Activated CD4-positive, alpha-beta T cell treated with anti-CD3 and anti-CD28 coated beads, Interleukin-2, amount 10 ng/mL, durations not matched to agents 7 days and 5 days (primary cell): ENCODE measurements at regions of chr6 and their contacts with region 1.

Region 1: DNA sequence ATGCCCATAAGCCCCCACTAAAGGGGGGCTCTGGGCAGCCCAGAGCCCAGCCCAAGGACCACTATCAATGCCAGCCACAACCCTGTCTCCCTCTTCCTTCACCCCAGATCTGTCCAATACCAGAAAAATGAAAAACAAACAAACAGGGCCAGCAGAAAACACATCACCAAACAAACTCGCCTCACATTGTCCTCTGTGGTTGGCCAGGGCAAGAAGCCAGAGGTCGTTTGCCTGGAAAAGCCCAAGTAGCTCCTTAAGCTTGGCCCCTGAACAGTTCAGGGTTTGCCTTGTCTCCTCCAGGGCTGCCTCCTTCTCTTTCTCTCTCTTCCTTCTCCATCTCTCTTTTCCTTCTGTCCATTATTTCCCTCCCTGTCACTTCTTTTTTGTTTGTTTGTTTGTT is 10.1 kb upstream of the SCUBE3 start:
- DNase-seq: no peak
- H3K4me3 Mint-ChIP-seq: no peak overlapping the region
- H3K27ac Mint-ChIP-seq: no peak overlapping the region
- H3K4me1 Mint-ChIP-seq: no peaks in the 10 kb centered on the region
- H3K27me3 Mint-ChIP-seq: peaks cover 44% of the 10 kb centered on the region

Region 2: DNA sequence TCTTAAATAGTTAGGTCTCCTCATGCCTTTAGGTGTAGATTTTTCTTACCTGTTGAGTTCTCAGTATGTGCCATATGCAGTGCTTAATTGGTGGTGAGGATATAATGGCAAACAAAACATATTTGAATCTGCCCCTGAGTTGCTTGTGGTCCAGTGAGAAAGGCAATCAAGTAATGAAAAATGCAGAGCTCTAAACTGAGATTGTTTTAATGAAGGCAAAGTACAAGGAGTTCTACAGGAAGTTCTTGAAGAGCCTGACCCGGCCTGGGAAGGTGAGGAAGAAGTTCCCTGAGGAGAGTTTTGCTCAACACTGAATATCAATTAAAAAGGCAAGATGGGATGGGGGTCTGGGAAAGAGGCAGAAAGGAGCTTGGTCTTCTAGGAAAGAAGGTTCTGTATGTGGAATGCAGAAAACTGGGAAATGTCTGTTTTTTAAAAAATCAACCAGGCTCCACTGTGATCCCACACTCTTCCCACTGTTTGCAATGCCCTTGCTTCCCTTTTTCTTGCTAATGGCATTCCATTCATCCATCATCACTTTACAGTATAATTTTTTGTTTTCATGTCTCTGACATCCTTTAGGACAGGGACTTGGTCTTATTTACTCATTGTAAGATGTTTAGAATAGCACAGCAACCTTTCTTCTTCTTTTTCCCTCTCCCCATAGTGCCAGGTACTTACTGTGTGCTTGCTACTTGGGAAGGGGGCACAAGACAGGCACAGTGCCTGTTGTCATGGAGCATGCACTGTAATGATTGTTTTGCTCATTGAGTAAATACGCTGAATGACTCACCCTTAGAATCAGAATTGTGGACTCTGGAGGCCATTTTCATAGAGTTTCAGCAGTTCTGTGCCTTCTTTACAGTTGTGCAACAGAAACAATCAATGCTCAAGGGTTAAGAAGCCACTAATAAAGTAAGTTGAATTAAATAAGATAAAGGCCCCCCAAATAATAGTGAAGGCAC is 250.3 kb before region 1 on chr6:
- CTCF ChIA-PET with region 1: no interaction called
- POLR2A ChIA-PET with region 1: no interaction called
- DNase-seq: no peak
- H3K4me3 Mint-ChIP-seq: no peak overlapping the region
- H3K27ac Mint-ChIP-seq: no peak overlapping the region
- H3K4me1 Mint-ChIP-seq: peaks cover 5% of the 10 kb centered on the region
- H3K27me3 Mint-ChIP-seq: no peaks in the 10 kb centered on the region

Region 3: DNA sequence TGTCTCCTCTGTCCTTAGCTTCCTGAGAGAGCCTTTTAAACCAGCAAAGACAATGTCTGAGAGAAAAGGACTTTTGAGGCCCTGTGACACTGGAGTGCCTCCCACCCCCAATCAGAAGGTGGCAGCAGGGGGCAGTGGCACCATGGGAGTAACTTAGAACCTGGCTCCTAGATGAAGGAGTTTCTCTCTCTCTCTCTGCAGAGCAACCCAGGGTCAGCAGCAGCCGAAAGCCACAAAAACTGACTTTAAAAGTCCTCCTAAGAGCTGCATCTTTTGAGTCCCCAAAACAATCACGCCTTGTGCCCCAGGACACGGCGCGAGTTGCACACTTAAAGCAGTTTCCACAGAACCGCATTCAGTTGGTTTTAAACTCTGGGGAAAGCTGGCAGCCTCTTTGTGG is 57.2 kb before region 1 on chr6:
- CTCF ChIA-PET with region 1: interaction called, 29 read pairs
- POLR2A ChIA-PET with region 1: interaction called, 4 read pairs
- DNase-seq: peak; percentile 20
- H3K4me3 Mint-ChIP-seq: no peak overlapping the region
- H3K27ac Mint-ChIP-seq: no peak overlapping the region
- H3K4me1 Mint-ChIP-seq: peaks cover 31% of the 10 kb centered on the region
- H3K27me3 Mint-ChIP-seq: peaks cover 6% of the 10 kb centered on the region